ENCODE measurements at regions of chr7 and their contacts with region 1.

Region 1: DNA sequence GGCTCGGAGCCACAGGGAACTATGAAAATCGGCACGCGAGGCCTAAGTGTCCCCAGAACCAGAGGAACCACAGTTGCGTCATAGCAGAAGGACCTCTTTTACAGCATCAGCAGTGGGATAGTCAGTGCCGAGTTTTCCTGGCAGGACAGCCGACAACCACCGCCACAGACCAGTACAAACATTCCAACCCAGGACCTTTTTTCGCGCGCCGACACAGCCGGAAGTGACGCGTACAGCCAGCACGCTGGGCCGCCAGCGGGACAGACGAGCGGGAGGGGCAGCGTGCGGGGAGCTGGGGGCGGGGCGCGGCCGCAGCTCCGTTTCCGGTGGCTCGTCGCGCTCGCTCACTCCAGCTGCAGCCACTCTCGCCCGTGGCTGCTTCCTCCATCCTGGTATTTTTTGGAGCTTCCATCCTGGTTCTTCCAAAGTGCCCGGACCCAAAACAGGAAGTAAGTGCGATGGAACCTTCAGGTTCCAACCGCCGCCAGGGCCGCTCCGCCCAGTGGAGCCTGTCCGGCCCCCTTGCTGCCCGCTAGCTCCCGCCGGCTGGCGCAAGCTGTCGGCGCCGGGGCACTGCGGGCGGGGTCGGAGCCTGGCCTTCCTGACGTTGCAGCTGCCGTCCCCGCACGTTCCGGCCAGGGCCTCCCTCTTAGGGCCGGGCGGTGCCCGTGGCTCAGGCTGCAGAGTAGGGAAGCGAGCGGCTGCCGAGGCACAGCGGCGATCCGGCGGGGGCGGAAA is at the start of gene DMTF1:
- DNase-seq: peak; percentile 94 to 95
- ATAC-seq: peak; percentile 91
- total RNA-seq, gene DMTF1: 48.8 to 58.8 TPM

Region 2: DNA sequence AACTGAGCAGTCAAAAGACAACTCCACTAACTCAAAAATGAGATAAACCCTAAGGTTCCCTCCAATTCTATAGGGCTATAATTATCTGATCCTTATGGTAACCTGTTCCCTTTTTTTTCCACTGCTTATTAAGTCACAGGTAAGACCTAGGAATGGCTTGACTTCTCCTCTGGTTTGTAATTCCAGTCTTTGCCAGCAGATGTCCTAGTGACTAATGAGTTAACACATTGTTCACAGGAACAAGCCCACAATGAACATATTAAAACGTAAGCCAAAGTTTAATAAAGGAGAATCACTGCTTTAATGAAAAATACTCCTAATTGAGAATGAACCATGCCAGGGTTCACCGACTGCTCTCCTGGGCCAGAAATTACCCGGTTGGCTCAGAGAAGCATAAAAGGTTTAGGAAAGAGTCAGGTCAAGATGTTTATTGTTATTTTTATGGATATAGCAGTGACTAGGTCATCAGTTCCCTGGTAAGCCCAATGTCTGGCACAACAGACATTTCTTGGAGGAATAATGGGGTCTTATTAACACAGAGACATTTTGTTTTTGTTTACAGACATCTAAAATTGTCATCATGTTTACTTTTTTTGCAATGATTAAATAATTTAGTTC is 213.0 kb before region 1 on chr7:
- intact Hi-C with region 1: loop called in 1 of 2 experiments (anchors 10 kb)
- DNase-seq: peak in 1 of 2 donors; percentile 39
- ATAC-seq: peak; percentile 82

Region 3: GRCh38 chr7:87219545-87220025 is 67.3 kb after region 1 on chr7 and contains the start of gene TMEM243:
- intact Hi-C with region 1: loop called in 1 of 2 experiments (anchors 5 kb)
- DNase-seq: peak; percentile 81 to 86
- ATAC-seq: peak; percentile 81
- total RNA-seq, gene TMEM243: 14.9 to 17.2 TPM

Region 4: DNA sequence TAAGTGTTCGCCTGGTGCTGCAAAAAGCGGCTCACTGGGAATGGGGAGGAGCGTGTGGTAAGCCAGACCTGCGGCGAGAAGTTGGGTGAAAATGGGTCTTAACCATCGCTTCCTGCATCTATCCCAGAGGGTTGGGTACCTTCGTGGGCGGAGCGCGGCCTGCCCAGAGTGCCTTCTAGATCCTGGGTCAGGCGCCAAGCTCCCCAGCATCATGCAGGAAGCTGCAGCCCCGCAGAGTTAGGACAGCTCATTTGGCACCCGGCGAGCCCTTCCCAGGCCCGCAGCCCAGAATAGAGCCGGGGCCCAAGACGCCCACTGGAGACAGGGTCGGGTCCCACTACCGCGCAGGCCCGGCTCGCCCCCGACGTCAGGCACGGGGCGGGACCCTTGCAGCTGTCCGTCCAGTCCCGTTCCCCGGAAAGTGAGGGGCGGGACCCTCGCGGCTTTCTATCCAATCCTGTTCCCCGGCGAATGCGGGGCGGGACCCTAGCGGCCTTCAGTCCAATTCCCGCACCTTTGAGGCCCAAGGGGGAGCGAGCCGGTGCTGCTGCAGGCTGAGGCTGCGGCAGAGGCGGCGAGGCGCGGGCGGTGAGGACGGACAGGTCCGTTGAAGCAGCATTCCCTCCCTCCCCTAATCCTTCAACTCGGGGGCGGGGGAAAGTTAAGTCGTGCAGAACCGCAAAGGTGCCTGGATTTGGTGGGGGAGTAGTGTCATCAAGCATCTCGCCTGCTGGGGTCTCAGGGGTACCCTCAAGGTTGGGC is 193.1 kb after region 1 on chr7 and contains the start of gene CROT:
- intact Hi-C with region 1: loop called in 1 of 2 experiments (anchors 10 kb)
- DNase-seq: peak; percentile 98 to 99
- ATAC-seq: peak; percentile 98
- total RNA-seq, gene CROT: 22.7 to 35.8 TPM

Measured in left colon (tissue), 2 donors.